A673 (cell line): ENCODE measurements at regions of chr2 and their contacts with region 1.

Region 1: DNA sequence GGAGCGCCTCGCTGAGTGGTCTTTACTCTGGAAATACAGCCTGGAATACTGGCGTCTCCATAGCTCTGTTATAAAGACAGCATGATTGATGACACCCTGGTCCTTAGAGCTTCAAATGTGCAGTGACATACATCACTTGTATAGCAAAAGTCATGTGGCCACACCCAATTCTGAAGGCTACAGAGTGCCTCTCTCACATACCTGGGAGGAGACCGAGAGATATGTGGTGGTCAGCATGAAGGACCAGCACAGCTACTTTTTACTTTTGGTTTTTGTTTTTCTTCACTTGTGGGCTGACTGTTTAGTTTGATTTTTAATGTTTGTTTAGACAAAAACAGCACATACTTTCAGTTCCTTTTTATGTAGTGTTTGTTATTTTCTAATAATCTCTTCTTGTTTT is 938.5 kb upstream of the SOX11 start:
- DNase-seq: no peak
- H3K4me3 ChIP-seq: no peak overlapping the region
- H3K27ac ChIP-seq: no peak overlapping the region
- H3K4me1 ChIP-seq: peaks cover 21% of the 10 kb centered on the region
- H3K27me3 ChIP-seq: no peaks in the 10 kb centered on the region
- CTCF ChIP-seq: no peak

Region 2: DNA sequence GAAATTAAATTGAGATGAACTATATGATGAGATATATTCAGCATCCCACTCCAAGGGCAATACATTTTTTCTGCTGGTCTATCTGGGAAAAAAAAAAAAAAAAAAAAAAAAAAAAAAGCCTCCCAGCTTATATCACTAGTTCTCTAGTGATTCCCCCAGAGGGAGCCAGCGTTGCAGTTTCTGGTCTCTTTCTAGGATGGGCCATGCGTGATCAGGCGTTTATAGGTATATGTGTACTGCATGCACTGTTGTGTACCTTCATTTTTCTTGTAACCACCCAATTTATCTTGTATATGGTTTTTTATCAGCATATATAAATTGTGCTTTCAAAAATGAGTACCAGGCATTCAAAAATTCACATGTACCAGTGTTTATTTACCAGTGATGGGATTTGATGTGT is 1015.3 kb before region 1 on chr2:
- CTCF ChIA-PET with region 1: no interaction called
- POLR2A ChIA-PET with region 1: no interaction called
- intact Hi-C with region 1: loop called (anchors 10 kb)
- DNase-seq: peak; percentile 85
- H3K4me3 ChIP-seq: no peak overlapping the region
- H3K27ac ChIP-seq: no peak overlapping the region
- H3K4me1 ChIP-seq: peaks cover 18% of the 10 kb centered on the region
- H3K27me3 ChIP-seq: no peaks in the 10 kb centered on the region
- CTCF ChIP-seq: peak; percentile 70

Region 3: DNA sequence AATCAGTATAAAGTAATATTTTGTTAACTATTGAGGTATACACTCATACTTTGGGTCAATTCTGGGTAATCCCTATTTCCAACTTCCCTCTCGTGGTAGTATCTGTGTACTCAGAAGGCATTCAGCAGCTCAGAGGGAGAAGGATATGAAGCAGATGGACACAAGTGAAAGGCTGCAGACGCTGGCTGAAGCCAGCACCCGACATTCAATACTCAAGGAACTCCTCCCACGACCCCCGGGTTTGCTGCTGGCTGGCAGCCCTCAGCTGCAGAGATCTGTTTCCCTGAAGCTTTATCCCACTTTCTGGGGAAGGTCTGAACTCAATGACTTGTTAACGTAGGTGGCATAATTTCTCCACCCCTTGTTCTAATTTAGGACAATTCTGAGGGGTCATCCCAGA is 91.2 kb after region 1 on chr2:
- CTCF ChIA-PET with region 1: no interaction called
- POLR2A ChIA-PET with region 1: no interaction called
- intact Hi-C with region 1: no loop called
- DNase-seq: no peak
- H3K4me3 ChIP-seq: no peak overlapping the region
- H3K27ac ChIP-seq: no peak overlapping the region
- H3K4me1 ChIP-seq: no peaks in the 10 kb centered on the region
- H3K27me3 ChIP-seq: no peaks in the 10 kb centered on the region
- CTCF ChIP-seq: no peak